ENCODE measurements at regions of chr1 and their contacts with region 1.

Region 1: GRCh38 chr1:198880818-198881597 is 242.2 kb downstream of the PTPRC start:
- DNase-seq: no peak
- H3K4me3 Mint-ChIP-seq: no peak overlapping the region
- H3K27ac Mint-ChIP-seq: peak overlapping the region; percentile 49
- H3K4me1 Mint-ChIP-seq: peaks cover 42% of the 10 kb centered on the region
- H3K27me3 Mint-ChIP-seq: no peaks in the 10 kb centered on the region

Region 2: DNA sequence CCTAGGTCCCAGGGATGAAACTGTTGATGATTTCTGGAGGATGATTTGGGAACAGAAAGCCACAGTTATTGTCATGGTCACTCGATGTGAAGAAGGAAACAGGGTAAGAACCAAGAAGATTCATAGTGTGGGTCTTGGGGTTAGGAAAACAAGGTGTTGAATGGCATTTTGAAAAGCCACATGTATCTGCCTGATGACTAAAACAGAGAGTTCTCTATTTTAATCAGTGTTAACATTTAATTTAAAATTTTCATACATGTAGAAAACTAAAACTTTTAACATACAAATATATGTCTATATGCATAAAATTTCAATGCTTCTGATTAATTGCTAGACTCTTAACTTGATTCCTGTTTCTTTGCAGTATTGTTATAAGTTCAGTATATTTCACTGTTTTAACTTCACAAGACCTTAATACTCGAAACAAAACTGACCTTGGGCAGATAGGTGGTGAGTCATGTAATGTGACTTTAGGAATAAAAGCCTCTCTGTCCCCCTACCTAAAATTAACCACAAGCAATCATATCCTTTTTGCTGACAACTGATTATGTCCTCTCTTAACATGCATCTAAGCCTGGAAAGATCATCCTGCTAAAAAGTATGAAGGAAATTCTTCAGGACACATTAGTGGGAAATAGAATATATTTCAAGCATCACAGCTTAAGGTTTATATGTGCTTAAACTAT is 146.5 kb before region 1 on chr1:
- intact Hi-C with region 1: loop called (anchors 1 kb)
- DNase-seq: no peak
- H3K4me3 Mint-ChIP-seq: no peak overlapping the region
- H3K27ac Mint-ChIP-seq: peak overlapping the region; percentile 73
- H3K4me1 Mint-ChIP-seq: peaks cover 62% of the 10 kb centered on the region
- H3K27me3 Mint-ChIP-seq: no peaks in the 10 kb centered on the region

Region 3: DNA sequence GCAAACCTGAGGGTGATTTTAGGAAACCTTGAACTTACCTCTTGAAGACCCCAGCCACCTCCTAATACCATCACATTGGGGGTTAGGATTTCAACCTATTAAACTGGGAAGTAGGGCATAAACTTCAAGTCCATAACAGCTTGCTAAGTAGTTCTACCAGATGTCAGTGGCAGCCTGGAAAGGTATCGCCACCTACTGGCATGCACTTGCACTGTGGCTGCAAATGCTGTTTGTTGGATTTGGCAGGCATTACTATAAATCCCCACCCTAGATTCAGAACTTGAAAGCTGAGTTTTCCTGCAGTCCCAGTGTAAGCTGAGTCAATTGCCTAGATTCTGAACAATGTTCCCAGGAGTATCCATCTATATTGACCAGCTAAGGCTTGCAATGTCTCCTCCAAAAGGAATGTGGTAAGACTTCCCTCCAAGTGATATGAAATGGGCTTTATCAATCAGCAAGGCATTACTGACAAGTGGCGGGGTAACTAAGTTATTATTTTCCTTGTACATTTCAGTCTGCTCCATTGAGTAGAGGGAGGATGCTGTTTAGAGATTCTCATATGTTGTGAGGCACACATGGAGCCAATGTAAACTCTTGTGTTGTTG is 232.4 kb after region 1 on chr1:
- intact Hi-C with region 1: loop called (anchors 5 kb)
- DNase-seq: peak; percentile 49
- H3K4me3 Mint-ChIP-seq: no peak overlapping the region
- H3K27ac Mint-ChIP-seq: no peak overlapping the region
- H3K4me1 Mint-ChIP-seq: peaks cover 11% of the 10 kb centered on the region
- H3K27me3 Mint-ChIP-seq: no peaks in the 10 kb centered on the region